MCF 10A (cell line): ENCODE measurements at regions of chr1 and their contacts with region 1.

Region 1: GRCh38 chr1:85576642-85577418 is 3.7 kb upstream of the CCN1 start:
- DNase-seq: peak; percentile 86
- H3K4me3 Mint-ChIP-seq: peak overlapping the region; percentile 77
- H3K27ac Mint-ChIP-seq: peak overlapping the region; percentile 94
- H3K4me1 Mint-ChIP-seq: peaks cover 35% of the 10 kb centered on the region
- H3K27me3 Mint-ChIP-seq: no peaks in the 10 kb centered on the region
- CTCF ChIP-seq: peak; percentile 84

Region 2: DNA sequence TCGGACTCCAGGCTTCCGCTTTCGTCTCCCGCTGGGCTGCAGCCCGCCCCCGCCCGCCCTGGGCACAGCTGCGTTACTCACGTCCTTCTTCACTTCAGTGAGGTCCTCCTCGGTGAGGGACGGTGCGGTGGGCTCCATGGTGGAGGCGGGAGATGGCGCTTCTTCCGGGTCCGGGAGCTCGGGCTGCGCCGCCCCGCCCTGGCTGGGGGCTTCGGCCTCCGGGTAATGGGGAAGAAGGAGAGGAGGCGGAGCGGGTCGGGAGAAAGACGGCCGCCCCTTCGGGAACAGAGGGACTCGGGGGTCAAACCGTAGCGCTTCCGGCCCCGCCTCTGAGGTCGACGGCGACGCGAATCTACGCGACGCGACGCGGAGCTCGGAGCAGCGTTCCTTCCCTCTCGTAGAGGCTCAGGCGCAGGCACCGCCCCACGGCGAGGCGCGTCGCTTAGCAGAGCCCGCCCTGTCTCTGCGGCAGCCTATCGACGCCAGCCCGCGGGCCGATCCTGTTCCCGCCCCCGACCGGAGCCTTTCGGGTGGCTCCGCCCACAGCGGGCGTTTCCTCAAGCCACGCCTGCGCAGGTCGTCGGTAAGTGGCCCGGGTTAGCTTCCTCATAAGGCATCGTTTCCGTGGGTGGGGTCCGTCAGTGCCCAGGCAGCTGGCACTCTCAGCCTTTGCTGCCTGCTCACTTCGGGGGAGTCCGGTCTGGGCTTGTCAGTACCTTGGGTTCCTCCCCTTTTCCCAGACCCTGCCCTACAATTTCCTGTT is 300.4 kb before region 1 on chr1 and contains the start of gene BCL10:
- CTCF ChIA-PET with region 1: interaction called, 7 read pairs
- POLR2A ChIA-PET with region 1: interaction called, 21 read pairs
- intact Hi-C with region 1: no loop called
- DNase-seq: peak; percentile 98
- H3K4me3 Mint-ChIP-seq: peak within 1 kb of the TSS; percentile 77
- H3K27ac Mint-ChIP-seq: peak within 1 kb of the TSS; percentile 85
- H3K4me1 Mint-ChIP-seq: peaks cover 40% of the 10 kb centered on the region
- H3K27me3 Mint-ChIP-seq: no peaks in the 10 kb centered on the region
- CTCF ChIP-seq: no peak
- total RNA-seq, gene BCL10: 43.9 and 55.8 TPM in 2 replicates

Region 3: DNA sequence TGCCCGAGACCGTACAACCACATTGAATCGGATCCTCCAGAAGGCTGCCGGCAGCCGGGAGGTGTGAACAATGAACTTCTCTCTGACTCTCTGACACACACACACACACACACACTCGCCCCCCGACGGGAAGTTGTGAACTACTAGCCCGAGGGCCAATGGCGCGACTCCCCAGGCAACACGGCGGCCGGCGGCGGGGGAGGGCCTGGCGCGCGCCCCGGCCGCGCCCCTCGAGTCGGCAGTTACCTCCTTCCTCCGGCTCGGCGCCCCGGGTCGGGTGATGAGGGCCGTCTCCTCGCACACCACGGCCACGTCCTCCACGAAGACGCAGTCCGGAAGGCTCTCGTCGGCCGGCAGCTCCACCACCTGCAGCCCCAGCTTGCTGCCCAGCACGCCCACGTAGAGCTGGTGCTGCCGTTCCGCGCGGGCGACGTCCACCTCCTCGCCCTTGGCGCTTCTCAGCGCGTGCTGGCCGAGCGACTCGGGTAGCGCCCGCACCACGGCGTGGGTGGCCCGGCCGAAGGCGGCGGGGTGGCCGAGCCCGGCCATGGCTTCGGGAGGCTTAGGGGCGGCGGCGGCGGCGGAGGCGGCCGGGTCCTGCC is 112.2 kb before region 1 on chr1:
- CTCF ChIA-PET with region 1: interaction called, 10 read pairs
- POLR2A ChIA-PET with region 1: interaction called, 16 read pairs
- intact Hi-C with region 1: no loop called
- DNase-seq: peak; percentile 53
- H3K4me3 Mint-ChIP-seq: peak overlapping the region; percentile 57
- H3K27ac Mint-ChIP-seq: no peak overlapping the region
- H3K4me1 Mint-ChIP-seq: peaks cover 11% of the 10 kb centered on the region
- H3K27me3 Mint-ChIP-seq: no peaks in the 10 kb centered on the region
- CTCF ChIP-seq: no peak

Region 4: GRCh38 chr1:85607126-85607912 is 30.5 kb after region 1 on chr1:
- CTCF ChIA-PET with region 1: interaction called, 9 read pairs
- POLR2A ChIA-PET with region 1: interaction called, 27 read pairs
- intact Hi-C with region 1: loop called (anchors 1 kb)
- DNase-seq: peak; percentile 91
- H3K4me3 Mint-ChIP-seq: peak overlapping the region; percentile 4
- H3K27ac Mint-ChIP-seq: peak overlapping the region; percentile 65
- H3K4me1 Mint-ChIP-seq: peaks cover 38% of the 10 kb centered on the region
- H3K27me3 Mint-ChIP-seq: no peaks in the 10 kb centered on the region
- CTCF ChIP-seq: no peak

Region 5: GRCh38 chr1:85692730-85693314 is 116.0 kb after region 1 on chr1:
- CTCF ChIA-PET with region 1: interaction called, 16 read pairs
- POLR2A ChIA-PET with region 1: interaction called, 8 read pairs
- intact Hi-C with region 1: no loop called
- DNase-seq: peak; percentile 52
- H3K4me3 Mint-ChIP-seq: no peak overlapping the region
- H3K27ac Mint-ChIP-seq: peak overlapping the region; percentile 65
- H3K4me1 Mint-ChIP-seq: peaks cover 10% of the 10 kb centered on the region
- H3K27me3 Mint-ChIP-seq: no peaks in the 10 kb centered on the region
- CTCF ChIP-seq: peak; percentile 60